SK-N-SH (cell line): ENCODE measurements at regions of chr11 and their contacts with region 1.

Region 1: GRCh38 chr11:27183672-27184457 is 143.2 kb downstream of the BBOX1 start:
- DNase-seq: peak; percentile 25
- H3K4me3 ChIP-seq: no peak overlapping the region; a peak in 1 of 4 replicates
- H3K27ac ChIP-seq: no peak overlapping the region
- H3K4me1 ChIP-seq: peaks cover 0 to 12% of the 10 kb centered on the region in 2 experiments; a peak in 2 of 4 replicates
- H3K27me3 ChIP-seq: no peaks in the 10 kb centered on the region
- CTCF ChIP-seq: peak; percentile 87
- EP300 ChIP-seq: no peak
- RAD21 ChIP-seq: peak; percentile 97

Region 2: DNA sequence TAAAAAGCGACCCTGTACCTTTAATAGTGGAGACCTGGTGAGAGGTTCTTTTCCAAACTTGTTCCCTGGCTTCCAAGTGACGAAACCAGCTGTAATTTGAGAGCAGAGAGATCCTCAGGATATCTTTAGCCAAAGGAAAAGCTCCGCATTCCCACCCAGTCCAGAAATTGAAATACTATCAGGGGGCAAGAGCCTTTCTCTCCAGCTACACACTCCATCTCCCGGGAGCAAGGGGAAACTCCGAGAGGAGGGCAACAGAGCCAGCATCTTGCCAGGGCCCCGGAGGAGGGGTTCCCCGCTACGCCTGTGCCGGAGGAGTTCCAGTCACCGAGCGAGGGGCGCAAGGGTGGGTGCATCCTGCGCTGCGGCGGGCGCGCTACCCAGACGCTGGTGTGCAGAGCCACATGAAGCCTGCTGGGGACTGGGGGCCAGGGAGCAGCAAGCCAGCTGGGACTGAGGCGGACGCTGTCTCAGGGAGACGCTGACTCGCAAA is 189.9 kb before region 1 on chr11 and contains the start of gene FIBIN:
- CTCF ChIA-PET with region 1: no interaction called
- POLR2A ChIA-PET with region 1: no interaction called
- DNase-seq: no peak
- H3K4me3 ChIP-seq: no peak within 1 kb of the TSS
- H3K27ac ChIP-seq: 0 out of 4 replicates have a peak within 1 kb of the TSS, but pooled peaks of 1 of the 2 experiments have one; percentile 53
- H3K4me1 ChIP-seq: peaks cover 6 to 13% of the 10 kb centered on the region in 2 experiments; a peak in 3 of 4 replicates
- H3K27me3 ChIP-seq: no peaks in the 10 kb centered on the region
- CTCF ChIP-seq: no peak
- EP300 ChIP-seq: no peak
- RAD21 ChIP-seq: no peak
- polyA plus RNA-seq, gene FIBIN: 0.55 and 0.66 TPM in 2 replicates

Region 3: GRCh38 chr11:27201454-27202236 is 17.8 kb after region 1 on chr11:
- CTCF ChIA-PET with region 1: interaction called, 28 read pairs
- POLR2A ChIA-PET with region 1: no interaction called
- DNase-seq: peak; percentile 47
- H3K4me3 ChIP-seq: no peak overlapping the region
- H3K27ac ChIP-seq: peak overlapping the region; percentile 54 to 93; a peak in 3 of 4 replicates
- H3K4me1 ChIP-seq: peaks cover 32 to 48% of the 10 kb centered on the region in 2 experiments; a peak in 3 of 4 replicates
- H3K27me3 ChIP-seq: no peaks in the 10 kb centered on the region
- CTCF ChIP-seq: no peak
- EP300 ChIP-seq: peak in 1 of 2 experiments; percentile 68; a peak in 1 of 4 replicates
- RAD21 ChIP-seq: no peak

Region 4: DNA sequence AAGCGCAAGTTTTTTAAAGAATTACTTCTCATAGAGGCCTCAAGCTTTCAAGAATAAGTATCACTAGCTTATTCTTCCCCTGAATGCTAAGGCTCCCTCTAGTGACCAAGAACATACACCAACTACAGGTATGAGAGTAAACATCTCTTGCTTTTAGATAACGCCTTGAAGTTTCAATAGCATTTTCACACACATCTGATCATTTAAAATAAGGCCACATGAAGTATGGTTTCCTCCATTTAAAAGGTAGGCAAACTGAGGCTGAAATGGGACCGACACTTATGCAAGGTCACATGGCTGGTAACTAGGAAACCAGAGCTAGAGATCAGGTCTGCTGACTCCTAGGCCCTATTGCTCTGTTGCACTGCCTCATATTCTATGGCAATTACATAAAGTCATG is 112.6 kb after region 1 on chr11:
- CTCF ChIA-PET with region 1: interaction called, 58 read pairs
- POLR2A ChIA-PET with region 1: no interaction called
- DNase-seq: peak; percentile 36
- H3K4me3 ChIP-seq: no peak overlapping the region; a peak in 1 of 4 replicates
- H3K27ac ChIP-seq: no peak overlapping the region
- H3K4me1 ChIP-seq: peaks cover 0 to 39% of the 10 kb centered on the region in 2 experiments; a peak in 1 of 4 replicates
- H3K27me3 ChIP-seq: no peaks in the 10 kb centered on the region
- CTCF ChIP-seq: peak; percentile 76
- EP300 ChIP-seq: no peak
- RAD21 ChIP-seq: peak; percentile 77

Region 5: DNA sequence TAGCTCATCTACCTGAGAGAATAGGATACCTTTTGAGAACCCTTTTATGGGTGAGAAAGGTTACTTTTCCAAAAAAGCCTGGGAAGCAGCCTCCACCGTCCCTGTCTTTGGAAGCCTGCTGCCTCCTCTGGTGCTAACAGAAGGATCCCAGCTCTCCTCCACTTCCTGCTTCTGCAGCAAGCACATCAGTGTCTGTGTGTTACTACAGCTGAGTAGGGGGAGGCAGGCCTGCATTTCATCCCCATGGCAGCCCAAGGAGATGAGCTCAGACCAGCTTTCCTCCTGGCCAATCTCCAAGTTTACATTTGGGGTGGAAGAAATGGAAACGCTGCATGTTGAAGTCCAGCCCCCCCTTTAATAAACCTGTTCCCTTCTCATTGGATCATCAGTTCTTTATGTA is 186.5 kb after region 1 on chr11:
- CTCF ChIA-PET with region 1: interaction called, 11 read pairs
- POLR2A ChIA-PET with region 1: no interaction called
- DNase-seq: no peak
- H3K4me3 ChIP-seq: no peak overlapping the region
- H3K27ac ChIP-seq: peak overlapping the region; percentile 14 to 47; a peak in 2 of 4 replicates
- H3K4me1 ChIP-seq: peaks cover 7 to 20% of the 10 kb centered on the region in 2 experiments; a peak in 3 of 4 replicates
- H3K27me3 ChIP-seq: no peaks in the 10 kb centered on the region
- CTCF ChIP-seq: no peak
- EP300 ChIP-seq: no peak
- RAD21 ChIP-seq: no peak

Region 6: GRCh38 chr11:27497284-27497866 is 313.5 kb after region 1 on chr11:
- CTCF ChIA-PET with region 1: interaction called, 32 read pairs
- POLR2A ChIA-PET with region 1: no interaction called
- DNase-seq: peak; percentile 21
- H3K4me3 ChIP-seq: no peak overlapping the region
- H3K27ac ChIP-seq: no peak overlapping the region
- H3K4me1 ChIP-seq: peaks cover 0 to 12% of the 10 kb centered on the region in 2 experiments; a peak in 2 of 4 replicates
- H3K27me3 ChIP-seq: no peaks in the 10 kb centered on the region
- CTCF ChIP-seq: peak; percentile 70
- EP300 ChIP-seq: no peak
- RAD21 ChIP-seq: peak; percentile 62